Activated T-helper 1 cell treated with anti-CD3 and anti-CD28 coated beads, Interleukin-12 subunit alpha, Interleukin-12 subunit beta, Interleukin-2, Interleukin-4 antibody, amounts not matched to agents 30 ng/mL and 10 ng/mL and 1 ng/mL, durations not matched to agents 14 hours and 24 hours and 36 hours (primary cell): ENCODE measurements at regions of chr2 and their contacts with region 1.

Region 1: DNA sequence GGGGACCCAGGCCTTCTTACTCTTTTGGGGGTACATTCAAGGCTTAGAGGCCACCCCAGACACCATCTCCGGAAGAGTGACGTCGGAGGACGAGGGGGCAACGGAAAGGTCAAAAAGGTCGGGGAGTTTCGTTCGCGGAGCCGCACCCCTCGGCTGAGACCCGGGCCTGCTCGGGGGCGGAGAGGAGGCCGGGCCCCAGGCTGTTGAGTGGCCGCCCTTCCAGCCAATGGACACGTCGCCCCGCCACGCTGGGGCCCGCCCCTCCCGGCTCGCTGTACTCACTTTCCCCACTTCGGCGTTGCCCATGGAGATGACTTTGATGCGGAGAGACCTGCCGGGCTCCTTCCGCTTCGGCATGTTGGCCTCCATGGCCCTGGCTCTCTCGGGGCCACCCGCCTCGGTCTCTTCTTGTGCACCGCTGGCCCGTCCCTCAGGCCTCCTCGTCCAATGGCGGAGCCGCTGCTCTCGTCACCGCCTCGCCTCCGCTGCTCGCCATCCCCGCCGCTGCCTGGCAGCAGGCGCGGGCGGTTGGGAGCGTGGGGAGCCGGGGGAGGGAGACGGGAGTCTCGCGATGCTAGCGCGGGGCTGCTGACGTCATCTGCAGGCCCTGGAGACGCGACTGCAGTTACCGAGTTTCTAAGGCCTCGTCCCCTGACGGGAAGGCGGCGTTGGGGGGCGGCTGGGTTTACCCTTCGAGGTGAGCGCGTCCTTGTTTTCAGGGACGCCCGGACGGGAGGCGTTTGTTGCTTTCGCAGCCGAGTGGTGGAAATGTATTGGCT is at the start of gene DNAJC27:
- DNase-seq: peak; percentile 96
- H3K4me3 Mint-ChIP-seq: peak within 1 kb of the TSS; percentile 96
- H3K27ac Mint-ChIP-seq: peak within 1 kb of the TSS; percentile 100
- H3K4me1 Mint-ChIP-seq: peaks cover 19% of the 10 kb centered on the region
- H3K27me3 Mint-ChIP-seq: no peaks in the 10 kb centered on the region
- total RNA-seq, gene DNAJC27: 6.3 and 7.0 TPM in 2 replicates

Region 2: GRCh38 chr2:24409700-24410556 is 561.8 kb before region 1 on chr2:
- intact Hi-C with region 1: loop called (anchors 2 kb)
- DNase-seq: peak; percentile 24
- H3K4me3 Mint-ChIP-seq: no peak overlapping the region
- H3K27ac Mint-ChIP-seq: no peak overlapping the region
- H3K4me1 Mint-ChIP-seq: peaks cover 5% of the 10 kb centered on the region
- H3K27me3 Mint-ChIP-seq: peaks cover 2% of the 10 kb centered on the region

Region 3: GRCh38 chr2:24448797-24449196 is 522.9 kb before region 1 on chr2:
- intact Hi-C with region 1: no loop called
- DNase-seq: no peak
- H3K4me3 Mint-ChIP-seq: no peak overlapping the region
- H3K27ac Mint-ChIP-seq: no peak overlapping the region
- H3K4me1 Mint-ChIP-seq: no peaks in the 10 kb centered on the region
- H3K27me3 Mint-ChIP-seq: peaks cover 8% of the 10 kb centered on the region

Region 4: GRCh38 chr2:24792874-24793760 is 178.6 kb before region 1 on chr2 and contains the starts of genes CENPO and PTRHD1:
- intact Hi-C with region 1: loop called (anchors 1 kb)
- DNase-seq: peak; percentile 92
- H3K4me3 Mint-ChIP-seq: peak within 1 kb of the TSS; percentile 95
- H3K27ac Mint-ChIP-seq: peak within 1 kb of the TSS; percentile 99
- H3K4me1 Mint-ChIP-seq: peaks cover 47% of the 10 kb centered on the region
- H3K27me3 Mint-ChIP-seq: peaks cover 1% of the 10 kb centered on the region
- total RNA-seq, gene CENPO: 44.7 and 48.3 TPM in 2 replicates
- total RNA-seq, gene PTRHD1: 16.5 and 17.3 TPM in 2 replicates

Region 5: DNA sequence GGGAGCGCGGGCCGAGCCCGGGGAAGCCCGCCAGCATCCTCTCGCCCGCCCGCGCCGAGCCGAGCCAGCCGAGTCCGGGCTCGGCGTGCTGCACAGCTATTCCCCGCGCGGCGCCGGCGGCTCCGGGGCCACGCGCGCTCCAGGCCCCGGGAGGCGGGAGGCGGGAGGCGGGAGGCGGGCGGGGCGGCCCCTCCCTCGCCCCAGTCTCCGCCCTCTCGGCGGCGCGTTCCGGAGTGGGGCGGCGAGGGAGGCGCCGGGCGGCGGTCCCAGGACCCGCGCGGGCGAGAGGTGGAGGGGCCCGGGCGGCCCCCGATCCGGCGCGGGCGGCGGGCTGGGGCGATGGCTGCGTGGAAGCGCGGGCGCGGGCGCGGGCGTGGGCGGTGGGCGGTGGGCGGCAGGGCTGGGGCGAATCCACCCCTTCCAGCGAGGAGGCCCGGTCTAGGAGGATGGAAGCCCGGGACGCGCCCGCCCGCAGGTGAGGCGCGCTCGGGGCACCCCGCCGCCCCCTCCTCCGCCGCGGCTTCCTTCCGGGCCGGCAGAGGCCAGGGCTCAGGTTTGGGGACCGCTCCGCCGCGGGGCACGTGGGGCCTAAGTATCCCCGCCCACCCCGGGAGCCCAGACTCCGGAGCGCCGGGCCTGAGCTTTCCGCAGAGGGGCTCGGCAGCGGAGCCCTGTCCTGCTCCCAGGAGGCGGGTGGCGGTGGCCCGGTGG is 51.5 kb before region 1 on chr2 and contains the start of gene ADCY3:
- intact Hi-C with region 1: loop called (anchors 1 kb)
- DNase-seq: peak; percentile 49
- H3K4me3 Mint-ChIP-seq: peak within 1 kb of the TSS; percentile 93
- H3K27ac Mint-ChIP-seq: peak within 1 kb of the TSS; percentile 90
- H3K4me1 Mint-ChIP-seq: peaks cover 32% of the 10 kb centered on the region
- H3K27me3 Mint-ChIP-seq: peaks cover 2% of the 10 kb centered on the region
- total RNA-seq, gene ADCY3: 101 and 108 TPM in 2 replicates

Region 6: DNA sequence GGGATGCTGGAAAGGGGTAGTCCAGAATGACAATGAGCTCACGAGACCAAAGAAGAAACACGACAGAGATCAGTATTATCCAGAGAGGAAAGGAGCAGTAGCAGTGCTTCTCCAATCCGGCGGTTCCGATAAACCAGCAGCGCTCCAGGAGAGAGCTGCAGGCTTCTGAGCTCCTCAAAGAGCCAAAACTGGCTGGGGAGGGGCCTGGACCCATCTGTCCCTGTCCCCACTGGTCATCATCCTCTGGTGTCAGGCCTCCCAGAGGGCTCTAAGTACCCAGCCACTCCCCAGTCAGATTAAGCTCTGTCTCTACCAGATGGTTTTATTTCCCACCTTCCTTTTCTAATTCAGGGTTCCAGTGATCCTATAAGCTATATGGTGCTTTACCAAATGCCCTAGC is 23.2 kb before region 1 on chr2:
- intact Hi-C with region 1: no loop called
- DNase-seq: no peak
- H3K4me3 Mint-ChIP-seq: no peak overlapping the region
- H3K27ac Mint-ChIP-seq: no peak overlapping the region
- H3K4me1 Mint-ChIP-seq: no peaks in the 10 kb centered on the region
- H3K27me3 Mint-ChIP-seq: no peaks in the 10 kb centered on the region

Region 7: GRCh38 chr2:25131567-25132298 is 160.0 kb after region 1 on chr2:
- intact Hi-C with region 1: loop called (anchors 1 kb)
- DNase-seq: no peak
- H3K4me3 Mint-ChIP-seq: peak overlapping the region; percentile 68
- H3K27ac Mint-ChIP-seq: no peak overlapping the region
- H3K4me1 Mint-ChIP-seq: peaks cover 10% of the 10 kb centered on the region
- H3K27me3 Mint-ChIP-seq: peaks cover 44% of the 10 kb centered on the region

Region 8: DNA sequence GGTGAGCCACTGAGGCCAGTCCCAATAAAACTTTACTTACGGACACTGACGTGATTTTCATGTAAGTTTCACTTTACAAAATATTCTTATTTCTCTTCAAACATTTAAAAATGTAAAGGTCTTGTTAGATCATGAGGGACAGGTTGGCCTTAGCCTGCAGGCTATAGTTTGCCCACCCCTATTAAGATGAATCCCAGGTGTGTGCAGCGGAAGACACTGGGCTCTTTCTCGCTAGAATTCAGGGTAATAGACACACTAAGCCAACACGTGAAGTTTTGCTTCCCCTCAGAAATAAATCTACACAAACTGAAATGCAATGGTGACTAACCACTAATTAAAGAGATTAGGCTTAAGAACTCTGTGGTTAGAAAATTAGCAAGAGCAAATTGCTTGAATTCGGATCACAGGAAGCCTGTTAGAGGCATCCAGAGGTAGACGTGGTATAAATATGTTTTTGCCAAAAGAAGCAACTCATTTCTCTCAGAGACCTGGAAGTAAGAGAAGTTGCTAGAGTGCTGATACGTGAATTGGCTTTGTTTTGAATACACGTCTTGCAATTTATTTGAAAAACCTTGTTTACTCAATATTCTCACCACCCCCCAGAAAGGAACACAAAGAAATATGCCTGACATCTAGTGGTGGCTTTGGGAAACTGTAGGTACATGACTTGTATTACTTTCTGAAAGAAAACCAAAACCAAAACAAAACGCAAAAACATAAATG is 550.1 kb after region 1 on chr2:
- intact Hi-C with region 1: loop called (anchors 5 kb)
- DNase-seq: peak; percentile 56
- H3K4me3 Mint-ChIP-seq: peak overlapping the region; percentile 5
- H3K27ac Mint-ChIP-seq: peak overlapping the region; percentile 65
- H3K4me1 Mint-ChIP-seq: peaks cover 21% of the 10 kb centered on the region
- H3K27me3 Mint-ChIP-seq: no peaks in the 10 kb centered on the region